MCF 10A (cell line): ENCODE measurements at regions of chr1 and their contacts with region 1.

Region 1: GRCh38 chr1:89762779-89763648 is 57.8 kb upstream of the LRRC8D start:
- DNase-seq: peak; percentile 78
- H3K4me3 Mint-ChIP-seq: peak overlapping the region; percentile 71
- H3K27ac Mint-ChIP-seq: no peak overlapping the region
- H3K4me1 Mint-ChIP-seq: no peaks in the 10 kb centered on the region
- H3K27me3 Mint-ChIP-seq: no peaks in the 10 kb centered on the region
- CTCF ChIP-seq: peak; percentile 94

Region 2: GRCh38 chr1:89483010-89483756 is 279.8 kb before region 1 on chr1:
- CTCF ChIA-PET with region 1: interaction called, 65 read pairs
- POLR2A ChIA-PET with region 1: no interaction called
- intact Hi-C with region 1: loop called (anchors 1 kb)
- DNase-seq: peak; percentile 79
- H3K4me3 Mint-ChIP-seq: no peak overlapping the region
- H3K27ac Mint-ChIP-seq: no peak overlapping the region
- H3K4me1 Mint-ChIP-seq: no peaks in the 10 kb centered on the region
- H3K27me3 Mint-ChIP-seq: no peaks in the 10 kb centered on the region
- CTCF ChIP-seq: peak; percentile 58

Region 3: GRCh38 chr1:89524369-89525168 is 238.4 kb before region 1 on chr1 and contains the start of gene LRRC8B:
- CTCF ChIA-PET with region 1: interaction called, 5 read pairs
- POLR2A ChIA-PET with region 1: no interaction called
- intact Hi-C with region 1: loop called (anchors 1 kb)
- DNase-seq: peak; percentile 87
- H3K4me3 Mint-ChIP-seq: peak within 1 kb of the TSS; percentile 77
- H3K27ac Mint-ChIP-seq: peak within 1 kb of the TSS; percentile 20
- H3K4me1 Mint-ChIP-seq: peaks cover 7% of the 10 kb centered on the region
- H3K27me3 Mint-ChIP-seq: no peaks in the 10 kb centered on the region
- CTCF ChIP-seq: no peak
- total RNA-seq, gene LRRC8B: 7.0 and 9.7 TPM in 2 replicates

Region 4: DNA sequence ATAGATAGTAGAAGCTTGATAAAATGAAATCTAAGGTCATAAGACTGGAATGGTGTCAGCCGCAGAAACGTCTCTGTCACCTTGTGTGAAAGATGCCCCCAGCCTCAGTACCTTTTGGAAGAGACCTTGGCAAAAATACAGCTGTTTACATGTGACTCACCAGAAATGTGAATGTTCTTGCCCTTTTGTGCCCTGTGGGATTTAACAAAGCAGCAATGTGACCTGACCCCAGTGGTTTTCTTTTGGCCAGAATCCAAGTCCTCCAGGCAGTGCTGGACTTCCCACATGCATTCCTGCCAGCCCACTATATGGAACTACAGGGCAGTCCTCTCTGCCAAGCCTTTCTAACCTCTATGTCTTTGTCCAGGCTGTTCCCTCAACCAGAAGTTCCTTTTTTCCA is 157.3 kb before region 1 on chr1:
- CTCF ChIA-PET with region 1: interaction called, 42 read pairs
- POLR2A ChIA-PET with region 1: no interaction called
- intact Hi-C with region 1: no loop called
- DNase-seq: peak; percentile 92
- H3K4me3 Mint-ChIP-seq: peak overlapping the region; percentile 32
- H3K27ac Mint-ChIP-seq: no peak overlapping the region
- H3K4me1 Mint-ChIP-seq: peaks cover 35% of the 10 kb centered on the region
- H3K27me3 Mint-ChIP-seq: no peaks in the 10 kb centered on the region
- CTCF ChIP-seq: no peak

Region 5: GRCh38 chr1:89622895-89623294 is 140.1 kb before region 1 on chr1:
- CTCF ChIA-PET with region 1: interaction called, 39 read pairs
- POLR2A ChIA-PET with region 1: no interaction called
- intact Hi-C with region 1: no loop called
- DNase-seq: peak; percentile 14
- H3K4me3 Mint-ChIP-seq: no peak overlapping the region
- H3K27ac Mint-ChIP-seq: no peak overlapping the region
- H3K4me1 Mint-ChIP-seq: no peaks in the 10 kb centered on the region
- H3K27me3 Mint-ChIP-seq: no peaks in the 10 kb centered on the region
- CTCF ChIP-seq: no peak

Region 6: DNA sequence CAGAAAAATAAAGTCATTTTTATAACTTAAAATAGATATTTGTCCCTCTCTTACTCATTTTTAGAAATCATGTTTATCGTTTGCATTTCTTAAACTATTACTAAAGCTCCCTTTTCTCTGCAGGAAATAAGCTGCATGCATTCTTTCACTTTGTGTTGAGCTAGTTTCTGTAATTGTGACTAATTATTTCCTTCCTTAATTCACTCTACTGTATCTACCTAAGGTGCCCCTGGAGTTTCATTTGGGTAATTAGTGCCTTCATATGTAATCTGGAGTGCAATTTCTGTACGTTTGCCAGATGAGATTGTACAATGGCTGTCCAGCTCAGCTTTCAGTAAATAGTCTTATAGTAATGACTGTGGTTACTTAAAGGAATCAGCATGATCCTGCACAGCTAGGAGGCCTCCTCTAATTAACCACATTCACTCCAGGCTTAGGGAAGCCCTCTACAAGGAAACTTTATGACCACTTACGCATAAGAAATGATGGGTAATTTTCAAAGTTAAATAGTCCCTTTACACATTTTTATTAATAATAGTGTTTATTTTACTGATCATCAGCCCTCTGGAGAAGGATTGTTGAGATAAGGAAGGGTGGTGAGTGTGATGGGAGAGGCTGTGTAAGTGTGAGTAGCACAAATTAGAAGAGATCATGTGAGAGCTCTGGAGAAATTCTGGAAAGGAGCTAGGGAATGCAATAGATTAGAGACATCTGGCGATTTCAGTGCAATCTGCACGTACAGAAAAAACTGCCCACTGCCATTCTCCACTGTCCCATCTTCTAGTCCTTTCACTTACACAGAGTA is 43.3 kb before region 1 on chr1:
- CTCF ChIA-PET with region 1: interaction called, 10 read pairs
- POLR2A ChIA-PET with region 1: no interaction called
- intact Hi-C with region 1: no loop called
- DNase-seq: peak; percentile 56
- H3K4me3 Mint-ChIP-seq: peak overlapping the region; percentile 27
- H3K27ac Mint-ChIP-seq: peak overlapping the region; percentile 21
- H3K4me1 Mint-ChIP-seq: peaks cover 20% of the 10 kb centered on the region
- H3K27me3 Mint-ChIP-seq: no peaks in the 10 kb centered on the region
- CTCF ChIP-seq: no peak